Activated CD8-positive, alpha-beta T cell treated with anti-CD3 and anti-CD28 coated beads for 36 hours (primary cell): ENCODE measurements at regions of chr11 and their contacts with region 1.

Region 1: DNA sequence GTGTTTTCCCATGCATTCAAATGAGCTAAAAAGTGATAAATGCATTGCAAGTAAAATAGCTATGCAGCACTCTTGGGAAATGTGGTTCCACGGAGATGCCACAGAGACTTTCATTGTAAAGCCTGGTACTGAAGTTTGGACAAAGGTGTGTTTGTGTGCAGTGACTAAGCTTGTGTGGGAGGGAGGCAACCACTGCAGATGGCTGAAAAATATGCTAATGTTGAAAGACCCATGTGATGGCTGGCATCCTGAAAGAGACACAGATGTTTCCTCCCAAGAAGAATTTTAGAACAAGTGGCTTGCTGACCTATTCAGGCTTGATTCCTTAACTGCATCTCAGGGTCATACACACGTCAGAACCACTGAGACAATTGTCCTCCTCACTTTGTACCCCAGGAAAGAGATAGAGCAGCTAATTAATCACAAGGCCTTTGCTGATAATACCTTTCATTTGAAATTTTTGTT is 73.8 kb downstream of the FAM76B start:
- DNase-seq: peak; percentile 81
- ATAC-seq: peak; percentile 79
- H3K4me3 Mint-ChIP-seq: no peak overlapping the region
- H3K27ac Mint-ChIP-seq: peak overlapping the region; percentile 74
- H3K4me1 Mint-ChIP-seq: peaks cover 47% of the 10 kb centered on the region
- H3K27me3 Mint-ChIP-seq: peaks cover 3% of the 10 kb centered on the region
- CTCF ChIP-seq: no peak

Region 2: DNA sequence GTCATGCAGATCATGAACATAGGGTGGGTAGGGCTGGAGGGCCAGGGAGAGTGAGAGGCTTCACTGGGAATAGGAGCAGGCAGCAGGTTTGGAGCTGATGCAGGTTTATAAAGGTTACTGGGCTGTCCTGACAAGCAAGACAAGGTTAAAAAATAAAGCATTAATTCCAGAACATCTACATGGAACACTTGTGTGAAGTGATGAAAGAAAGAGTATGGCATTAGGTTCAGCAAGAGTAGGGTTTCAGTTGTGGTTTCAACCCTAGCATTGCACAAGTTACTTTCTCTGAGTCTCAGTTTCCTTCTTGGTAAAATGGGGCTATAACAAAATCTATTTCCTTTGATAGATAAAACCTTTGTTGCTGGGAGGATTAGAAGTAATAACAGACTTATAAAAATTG is 370.2 kb before region 1 on chr11:
- CTCF ChIA-PET with region 1: no interaction called
- POLR2A ChIA-PET with region 1: no interaction called
- intact Hi-C with region 1: loop called (anchors 10 kb)
- DNase-seq: peak; percentile 11
- ATAC-seq: peak; percentile 84
- H3K4me3 Mint-ChIP-seq: no peak overlapping the region
- H3K27ac Mint-ChIP-seq: peak overlapping the region; percentile 80
- H3K4me1 Mint-ChIP-seq: peaks cover 22% of the 10 kb centered on the region
- H3K27me3 Mint-ChIP-seq: no peaks in the 10 kb centered on the region
- CTCF ChIP-seq: no peak

Region 3: DNA sequence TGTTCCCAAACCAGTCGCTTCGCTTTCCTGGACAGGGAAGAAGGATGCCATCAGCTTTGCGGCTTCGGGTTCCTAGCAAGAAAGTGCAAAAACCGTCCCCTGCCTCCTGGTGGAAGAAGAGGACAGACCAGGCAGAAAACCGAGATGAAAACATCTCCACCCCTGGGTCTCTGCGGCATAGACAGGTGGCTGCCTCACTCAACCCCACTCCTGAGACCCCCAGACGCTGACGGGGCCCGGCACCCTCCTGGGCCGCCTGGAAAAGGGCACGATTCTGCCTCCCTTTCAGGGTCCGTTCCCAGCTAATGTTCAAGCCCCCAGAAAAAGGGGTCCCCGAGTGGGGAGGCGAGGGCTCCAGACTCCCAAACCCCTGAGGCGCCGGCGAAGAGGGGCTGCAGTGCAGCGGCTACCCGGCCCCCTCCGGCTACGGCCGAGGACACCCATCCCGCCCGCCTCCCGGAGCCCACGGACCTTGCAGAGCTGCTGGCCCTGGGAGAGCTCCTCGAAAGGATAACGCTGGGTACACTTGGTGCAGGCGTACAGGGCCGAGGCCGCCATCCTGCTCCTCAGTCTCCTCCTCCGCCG is 73.2 kb after region 1 on chr11:
- CTCF ChIA-PET with region 1: no interaction called
- POLR2A ChIA-PET with region 1: no interaction called
- intact Hi-C with region 1: no loop called
- DNase-seq: peak; percentile 39
- ATAC-seq: no peak
- H3K4me3 Mint-ChIP-seq: peak overlapping the region; percentile 98
- H3K27ac Mint-ChIP-seq: peak overlapping the region; percentile 100
- H3K4me1 Mint-ChIP-seq: peaks cover 45% of the 10 kb centered on the region
- H3K27me3 Mint-ChIP-seq: no peaks in the 10 kb centered on the region
- CTCF ChIP-seq: peak; percentile 26